ENCODE measurements at regions of chr9 and their contacts with region 1.

Region 1: GRCh38 chr9:976258-976942 is at the start of gene DMRT3:
- DNase-seq: no peak
- ATAC-seq: peak; percentile 35
- H3K4me3 ChIP-seq: no peak within 1 kb of the TSS
- H3K27ac ChIP-seq: no peak within 1 kb of the TSS
- H3K4me1 ChIP-seq: no peaks in the 10 kb centered on the region
- H3K27me3 ChIP-seq: peaks cover 8 to 80% of the 10 kb centered on the region in 2 experiments
- CTCF ChIP-seq: no peak
- EP300 ChIP-seq: no peak
- POLR2A ChIP-seq: no peak
- RAD21 ChIP-seq: no peak
- total RNA-seq, gene DMRT3: not detected in 2 replicates

Region 2: GRCh38 chr9:581673-582497 is 394.5 kb before region 1 on chr9:
- CTCF ChIA-PET with region 1: no interaction called
- POLR2A ChIA-PET with region 1: no interaction called
- in situ Hi-C with region 1: loop called (anchors 25 kb)
- intact Hi-C with region 1: no loop called
- DNase-seq: peak; percentile 41
- ATAC-seq: peak; percentile 100
- H3K4me3 ChIP-seq: no peak overlapping the region
- H3K27ac ChIP-seq: no peak overlapping the region
- H3K4me1 ChIP-seq: 0 out of 2 replicates have a peak, but pooled peaks cover 5% of the 10 kb centered on the region
- H3K27me3 ChIP-seq: no peaks in the 10 kb centered on the region
- CTCF ChIP-seq: peak; percentile 85
- EP300 ChIP-seq: no peak
- POLR2A ChIP-seq: no peak
- RAD21 ChIP-seq: peak; percentile 82

Measured in HepG2 (cell line).